ENCODE measurements at regions of chr1 and their contacts with region 1.

Region 1: DNA sequence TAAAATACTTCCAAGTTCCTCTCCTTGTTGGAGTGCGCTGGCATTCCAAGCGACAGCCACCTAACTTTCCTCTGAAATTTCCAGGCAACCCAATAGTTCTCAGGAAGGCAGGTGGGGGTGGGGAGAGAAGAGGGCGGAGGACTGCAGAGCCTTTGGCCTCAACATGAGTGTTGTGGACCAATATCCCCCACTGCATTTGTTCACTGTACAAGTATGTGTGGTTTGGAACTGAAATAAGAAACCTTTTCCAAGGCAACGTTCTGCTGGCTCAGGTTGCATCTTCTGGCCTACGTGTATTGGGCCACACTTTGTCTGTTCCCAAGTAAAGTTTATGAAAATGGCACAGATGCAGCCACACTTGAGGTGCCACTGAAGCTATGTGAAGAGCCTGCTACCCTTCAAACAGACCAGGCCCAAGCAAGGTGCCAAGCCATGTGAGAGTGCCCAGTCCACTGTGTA is 153.4 kb downstream of the DHRS3 start:
- DNase-seq: peak; percentile 79 to 83
- ATAC-seq: peak; percentile 87
- H3K4me3 ChIP-seq: no peak overlapping the region
- H3K27ac ChIP-seq: peak overlapping the region; percentile 69 to 88
- H3K4me1 ChIP-seq: peaks cover 6 to 39% of the 10 kb centered on the region in 2 donors
- H3K27me3 ChIP-seq: no peaks in the 10 kb centered on the region

Region 2: GRCh38 chr1:12407050-12407961 is 57.3 kb before region 1 on chr1:
- intact Hi-C with region 1: loop called in 1 of 2 experiments (anchors 5 kb)
- DNase-seq: no peak
- ATAC-seq: peak; percentile 65
- H3K4me3 ChIP-seq: no peak overlapping the region
- H3K27ac ChIP-seq: peak overlapping the region; percentile 19 to 57
- H3K4me1 ChIP-seq: peaks cover 4 to 6% of the 10 kb centered on the region in 2 donors
- H3K27me3 ChIP-seq: no peaks in the 10 kb centered on the region

Region 3: GRCh38 chr1:12424087-12424529 is 40.5 kb before region 1 on chr1:
- intact Hi-C with region 1: loop called in 1 of 2 experiments (anchors 5 kb)
- DNase-seq: no peak
- ATAC-seq: peak; percentile 45
- H3K4me3 ChIP-seq: no peak overlapping the region
- H3K27ac ChIP-seq: peak overlapping the region; percentile 82 to 93
- H3K4me1 ChIP-seq: peaks cover 0 to 8% of the 10 kb centered on the region in 2 donors
- H3K27me3 ChIP-seq: no peaks in the 10 kb centered on the region